ENCODE measurements at regions of chr15 and their contacts with region 1.

Region 1: GRCh38 chr15:92097474-92098178 is 244.1 kb downstream of the SLCO3A1 start:
- DNase-seq: peak; percentile 44
- H3K4me3 ChIP-seq: no peak overlapping the region
- H3K27ac ChIP-seq: no peak overlapping the region
- H3K4me1 ChIP-seq: peaks cover 19% of the 10 kb centered on the region
- CTCF ChIP-seq: peak; percentile 73

Region 2: GRCh38 chr15:92383519-92384326 is 286.1 kb after region 1 on chr15:
- CTCF ChIA-PET with region 1: no interaction called
- POLR2A ChIA-PET with region 1: no interaction called
- intact Hi-C with region 1: loop called (anchors 2 kb)
- DNase-seq: no peak
- H3K4me3 ChIP-seq: no peak overlapping the region
- H3K27ac ChIP-seq: no peak overlapping the region
- H3K4me1 ChIP-seq: no peaks in the 10 kb centered on the region
- CTCF ChIP-seq: peak; percentile 70

Region 3: GRCh38 chr15:92714477-92715401 is 617.1 kb after region 1 on chr15:
- CTCF ChIA-PET with region 1: no interaction called
- POLR2A ChIA-PET with region 1: no interaction called
- intact Hi-C with region 1: loop called (anchors 5 kb)
- DNase-seq: peak; percentile 54
- H3K4me3 ChIP-seq: no peak overlapping the region
- H3K27ac ChIP-seq: no peak overlapping the region
- H3K4me1 ChIP-seq: no peaks in the 10 kb centered on the region
- CTCF ChIP-seq: peak; percentile 90